ENCODE measurements at regions of chr10 and their contacts with region 1.

Region 1: GRCh38 chr10:34666008-34666705 is 148.9 kb downstream of the PARD3 start:
- DNase-seq: peak; percentile 90
- H3K4me3 Mint-ChIP-seq: peak overlapping the region; percentile 57
- H3K27ac Mint-ChIP-seq: peak overlapping the region; percentile 87
- H3K4me1 Mint-ChIP-seq: peaks cover 24% of the 10 kb centered on the region
- H3K27me3 Mint-ChIP-seq: no peaks in the 10 kb centered on the region
- CTCF ChIP-seq: peak; percentile 73

Region 2: DNA sequence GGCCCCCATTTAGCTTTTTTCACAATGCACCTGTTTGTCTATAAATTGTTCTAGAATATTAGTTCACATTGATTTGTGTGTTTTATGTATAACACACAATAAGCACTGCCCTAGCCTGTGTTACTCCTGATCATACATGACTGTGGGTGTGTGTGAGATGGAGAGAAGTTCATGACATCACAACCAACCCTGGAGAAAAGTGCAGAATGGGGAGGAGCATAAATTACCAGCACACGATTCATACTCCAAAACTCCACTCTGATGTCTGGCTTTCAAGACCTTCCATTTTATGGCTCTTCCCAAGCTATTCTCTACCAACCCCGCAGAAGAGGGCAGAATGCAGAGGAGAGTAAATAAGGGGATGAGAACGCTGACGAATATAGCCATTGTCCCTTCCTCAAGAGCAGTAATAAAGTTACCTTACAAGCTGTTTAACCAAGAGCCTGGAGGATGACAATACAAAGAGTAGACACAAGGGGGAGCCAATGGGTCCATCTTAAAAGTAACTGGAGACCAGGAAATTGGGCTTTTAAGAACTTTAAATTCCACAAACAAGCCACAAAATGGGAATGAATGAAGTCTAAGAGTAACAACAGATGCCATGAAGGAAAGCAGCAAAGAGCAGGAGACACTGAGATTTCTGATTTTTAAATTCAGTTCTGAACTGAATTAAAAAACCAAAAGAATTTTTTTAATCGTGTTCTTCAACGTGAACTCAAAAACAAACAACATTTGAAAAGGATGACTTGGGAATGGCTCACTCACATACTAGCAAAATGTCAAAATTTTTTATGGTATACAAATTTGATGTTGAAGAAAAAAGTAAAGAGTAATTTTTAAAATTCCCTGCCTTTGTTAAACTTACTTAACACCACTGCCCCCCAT is 10.6 kb before region 1 on chr10:
- CTCF ChIA-PET with region 1: interaction called, 10 read pairs
- POLR2A ChIA-PET with region 1: interaction called, 3 read pairs
- intact Hi-C with region 1: no loop called
- DNase-seq: peak; percentile 69
- H3K4me3 Mint-ChIP-seq: no peak overlapping the region
- H3K27ac Mint-ChIP-seq: no peak overlapping the region
- H3K4me1 Mint-ChIP-seq: peaks cover 18% of the 10 kb centered on the region
- H3K27me3 Mint-ChIP-seq: no peaks in the 10 kb centered on the region
- CTCF ChIP-seq: peak; percentile 79

Region 3: GRCh38 chr10:34743814-34744213 is 77.7 kb after region 1 on chr10:
- CTCF ChIA-PET with region 1: no interaction called
- POLR2A ChIA-PET with region 1: no interaction called
- intact Hi-C with region 1: no loop called
- DNase-seq: peak; percentile 78
- H3K4me3 Mint-ChIP-seq: peak overlapping the region; percentile 49
- H3K27ac Mint-ChIP-seq: peak overlapping the region; percentile 92
- H3K4me1 Mint-ChIP-seq: peaks cover 65% of the 10 kb centered on the region
- H3K27me3 Mint-ChIP-seq: no peaks in the 10 kb centered on the region
- CTCF ChIP-seq: no peak

Region 4: DNA sequence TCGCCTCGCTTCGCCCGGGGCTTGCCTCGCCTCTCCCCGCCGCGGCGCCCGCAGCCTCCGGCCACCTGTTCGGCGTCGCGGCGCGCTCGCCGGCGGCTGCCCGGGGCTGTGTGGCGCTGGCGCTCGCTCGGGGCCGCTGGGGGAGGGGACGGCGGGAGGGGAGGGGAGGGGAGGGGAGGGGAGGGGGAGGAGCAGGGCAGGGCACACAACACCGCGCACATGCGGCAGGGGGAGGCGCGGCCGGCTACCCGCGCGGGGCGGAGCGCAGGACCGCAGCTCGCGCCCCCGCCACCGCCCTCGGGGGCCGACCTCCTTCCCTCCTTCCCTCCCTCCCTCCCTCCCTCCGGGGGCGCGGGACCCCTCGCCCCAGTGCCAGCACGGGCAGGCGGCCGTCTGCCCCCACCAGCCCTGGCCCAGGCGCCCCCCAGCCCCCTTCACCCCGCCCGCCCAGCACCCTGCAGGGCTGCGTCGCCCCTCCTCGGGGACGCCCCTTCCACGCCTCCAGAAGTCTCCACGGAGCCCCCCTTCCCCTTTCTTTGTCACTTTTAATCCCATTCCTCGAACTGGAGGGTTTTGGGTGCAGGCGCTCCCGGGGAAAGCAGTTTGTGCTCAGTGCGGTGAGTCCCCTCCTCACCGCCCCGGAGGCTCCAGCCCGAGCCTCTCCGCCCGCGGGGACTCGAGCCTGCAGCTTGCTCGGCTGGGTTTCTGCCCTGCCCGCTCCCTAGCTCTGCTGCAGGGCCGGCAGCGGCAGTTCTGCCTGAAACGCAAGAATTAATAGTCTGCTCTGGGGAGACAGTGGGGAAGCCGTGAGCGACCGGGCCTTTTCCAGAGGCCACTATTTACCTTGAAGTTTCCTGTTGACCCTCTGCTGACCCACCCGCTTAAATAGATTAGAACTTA is 149.3 kb after region 1 on chr10 and contains the start of gene PARD3:
- CTCF ChIA-PET with region 1: no interaction called
- POLR2A ChIA-PET with region 1: interaction called, 3 read pairs
- intact Hi-C with region 1: loop called (anchors 5 kb)
- DNase-seq: peak; percentile 42
- H3K4me3 Mint-ChIP-seq: peak within 1 kb of the TSS; percentile 83
- H3K27ac Mint-ChIP-seq: peak within 1 kb of the TSS; percentile 75
- H3K4me1 Mint-ChIP-seq: peaks cover 34% of the 10 kb centered on the region
- H3K27me3 Mint-ChIP-seq: no peaks in the 10 kb centered on the region
- CTCF ChIP-seq: no peak
- total RNA-seq, gene PARD3: 49.6 and 70.0 TPM in 2 replicates

Region 5: DNA sequence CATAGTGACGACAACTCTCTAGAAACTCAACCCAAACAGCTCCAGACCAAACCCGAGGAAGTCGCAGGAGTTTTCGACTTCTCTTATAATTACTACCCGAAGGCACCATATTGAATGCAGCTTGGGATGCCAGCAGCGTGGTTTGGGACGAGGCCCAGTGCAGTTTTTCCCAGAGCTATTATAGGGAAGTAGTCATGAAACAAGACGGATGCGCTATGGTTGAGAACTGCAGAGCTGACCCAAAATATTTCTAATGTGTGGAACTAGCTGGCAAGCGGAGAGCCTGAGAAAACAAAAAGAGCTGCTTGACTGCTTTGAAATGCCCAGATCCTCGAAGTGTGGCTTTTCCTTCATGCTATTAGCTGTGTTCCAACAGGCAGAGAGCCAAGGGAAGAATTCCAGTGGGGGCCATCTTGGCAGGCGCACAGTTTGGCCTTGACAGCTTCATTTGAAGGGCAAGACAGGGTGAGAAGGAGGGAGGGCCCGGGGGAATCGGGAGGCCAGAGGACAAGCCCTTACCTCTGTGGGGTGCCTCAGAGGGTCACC is 301.3 kb after region 1 on chr10:
- CTCF ChIA-PET with region 1: no interaction called
- POLR2A ChIA-PET with region 1: no interaction called
- intact Hi-C with region 1: loop called (anchors 5 kb)
- DNase-seq: no peak
- H3K4me3 Mint-ChIP-seq: no peak overlapping the region
- H3K27ac Mint-ChIP-seq: no peak overlapping the region
- H3K4me1 Mint-ChIP-seq: peaks cover 17% of the 10 kb centered on the region
- H3K27me3 Mint-ChIP-seq: no peaks in the 10 kb centered on the region
- CTCF ChIP-seq: no peak

Region 6: DNA sequence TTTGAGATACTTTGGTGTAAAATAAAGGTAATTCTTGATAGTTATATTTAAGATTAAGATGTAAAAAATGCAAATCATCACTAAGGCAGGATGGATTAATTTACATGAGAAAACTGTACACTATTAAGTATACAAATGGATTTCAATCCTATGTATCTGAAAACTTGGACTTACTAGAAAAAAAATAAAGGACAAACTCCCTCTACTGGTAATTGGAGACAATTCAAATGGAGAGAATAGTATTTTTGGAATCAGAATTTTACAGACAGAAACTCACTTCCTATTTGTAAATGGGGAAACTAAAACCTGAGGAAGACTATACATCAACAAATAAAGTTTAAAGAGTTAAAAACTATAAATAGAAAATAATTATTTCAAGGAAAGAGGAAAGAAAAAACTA is 361.4 kb after region 1 on chr10:
- CTCF ChIA-PET with region 1: interaction called, 5 read pairs
- POLR2A ChIA-PET with region 1: interaction called, 4 read pairs
- intact Hi-C with region 1: loop called (anchors 2 kb)
- DNase-seq: peak; percentile 38
- H3K4me3 Mint-ChIP-seq: no peak overlapping the region
- H3K27ac Mint-ChIP-seq: no peak overlapping the region
- H3K4me1 Mint-ChIP-seq: peaks cover 5% of the 10 kb centered on the region
- H3K27me3 Mint-ChIP-seq: no peaks in the 10 kb centered on the region
- CTCF ChIP-seq: peak; percentile 44